IMR-90 (cell line): ENCODE measurements at regions of chr9 and their contacts with region 1.

Region 1: GRCh38 chr9:22008736-22009562 is at the start of gene CDKN2B:
- DNase-seq: peak; percentile 94
- ATAC-seq: peak; percentile 98
- H3K4me3 ChIP-seq: peak within 1 kb of the TSS; percentile 65
- H3K27ac ChIP-seq: peak within 1 kb of the TSS; percentile 70
- H3K4me1 ChIP-seq: peaks cover 8% of the 10 kb centered on the region; the same call in 1 of the 2 replicates
- H3K27me3 ChIP-seq: no peaks in the 10 kb centered on the region
- CTCF ChIP-seq: peak; percentile 85
- POLR2A ChIP-seq: peak; percentile 97
- RAD21 ChIP-seq: peak; percentile 67
- total RNA-seq, gene CDKN2B: 3.6 and 5.6 TPM in 2 replicates

Region 2: GRCh38 chr9:22037954-22038690 is 29.2 kb after region 1 on chr9:
- CTCF ChIA-PET with region 1: interaction called, 34 read pairs
- POLR2A ChIA-PET with region 1: no interaction called
- dilution Hi-C with region 1: no loop called
- in situ Hi-C with region 1: no loop called
- intact Hi-C with region 1: no loop called
- DNase-seq: peak; percentile 47
- ATAC-seq: peak; percentile 36; the same call in 1 of the 2 replicates
- H3K4me3 ChIP-seq: no peak overlapping the region
- H3K27ac ChIP-seq: no peak overlapping the region
- H3K4me1 ChIP-seq: peaks cover 4% of the 10 kb centered on the region
- H3K27me3 ChIP-seq: no peaks in the 10 kb centered on the region
- CTCF ChIP-seq: peak; percentile 55
- POLR2A ChIP-seq: no peak
- RAD21 ChIP-seq: peak; percentile 67

Region 3: DNA sequence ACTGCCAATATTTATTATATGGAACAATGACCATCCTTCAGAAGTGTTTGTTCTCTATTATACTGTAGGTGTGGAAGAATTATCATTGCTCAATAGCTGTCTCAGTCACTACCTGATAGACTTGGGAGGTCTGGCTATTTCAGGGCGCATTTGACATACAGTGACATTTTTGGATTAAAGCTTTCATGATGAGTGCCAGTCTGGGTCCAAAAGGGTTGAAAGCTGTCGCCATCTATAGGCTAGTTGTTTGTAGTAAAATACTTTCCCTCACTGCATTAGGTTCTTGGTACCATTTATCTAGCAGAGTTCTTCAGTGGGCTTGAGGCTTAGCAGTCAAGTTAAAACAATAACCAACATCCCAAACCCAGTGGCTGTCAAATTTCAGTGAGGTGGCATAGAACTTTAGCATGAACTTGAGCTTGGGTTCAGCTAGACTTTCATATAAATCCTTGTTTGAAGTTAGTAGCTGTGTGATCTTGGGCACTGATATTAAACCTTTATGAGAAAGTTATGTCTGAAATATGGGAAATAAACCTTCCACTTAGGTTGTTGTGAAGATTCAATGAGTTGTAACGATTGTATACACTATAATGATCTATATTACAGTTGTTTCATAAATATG is 110.7 kb after region 1 on chr9:
- CTCF ChIA-PET with region 1: interaction called, 39 read pairs
- POLR2A ChIA-PET with region 1: no interaction called
- dilution Hi-C with region 1: no loop called
- in situ Hi-C with region 1: no loop called
- intact Hi-C with region 1: loop called (anchors 1 kb)
- DNase-seq: peak; percentile 50
- ATAC-seq: peak; percentile 30; the same call in 1 of the 2 replicates
- H3K4me3 ChIP-seq: no peak overlapping the region
- H3K27ac ChIP-seq: no peak overlapping the region
- H3K4me1 ChIP-seq: peaks cover 16% of the 10 kb centered on the region
- H3K27me3 ChIP-seq: no peaks in the 10 kb centered on the region
- CTCF ChIP-seq: peak; percentile 64
- POLR2A ChIP-seq: no peak
- RAD21 ChIP-seq: peak; percentile 75

Region 4: GRCh38 chr9:22244141-22245011 is 235.4 kb after region 1 on chr9:
- CTCF ChIA-PET with region 1: interaction called, 17 read pairs
- POLR2A ChIA-PET with region 1: interaction called, 3 read pairs
- dilution Hi-C with region 1: no loop called
- in situ Hi-C with region 1: no loop called
- intact Hi-C with region 1: loop called (anchors 1 kb)
- DNase-seq: peak; percentile 63
- ATAC-seq: peak; percentile 92
- H3K4me3 ChIP-seq: no peak overlapping the region
- H3K27ac ChIP-seq: no peak overlapping the region
- H3K4me1 ChIP-seq: no peaks in the 10 kb centered on the region
- H3K27me3 ChIP-seq: peaks cover 3% of the 10 kb centered on the region
- CTCF ChIP-seq: peak; percentile 67
- POLR2A ChIP-seq: no peak
- RAD21 ChIP-seq: peak; percentile 67